Activated CD4-positive, alpha-beta memory T cell treated with anti-CD3 and anti-CD28 coated beads for 36 hours (primary cell): ENCODE measurements at regions of chr5 and their contacts with region 1.

Region 1: DNA sequence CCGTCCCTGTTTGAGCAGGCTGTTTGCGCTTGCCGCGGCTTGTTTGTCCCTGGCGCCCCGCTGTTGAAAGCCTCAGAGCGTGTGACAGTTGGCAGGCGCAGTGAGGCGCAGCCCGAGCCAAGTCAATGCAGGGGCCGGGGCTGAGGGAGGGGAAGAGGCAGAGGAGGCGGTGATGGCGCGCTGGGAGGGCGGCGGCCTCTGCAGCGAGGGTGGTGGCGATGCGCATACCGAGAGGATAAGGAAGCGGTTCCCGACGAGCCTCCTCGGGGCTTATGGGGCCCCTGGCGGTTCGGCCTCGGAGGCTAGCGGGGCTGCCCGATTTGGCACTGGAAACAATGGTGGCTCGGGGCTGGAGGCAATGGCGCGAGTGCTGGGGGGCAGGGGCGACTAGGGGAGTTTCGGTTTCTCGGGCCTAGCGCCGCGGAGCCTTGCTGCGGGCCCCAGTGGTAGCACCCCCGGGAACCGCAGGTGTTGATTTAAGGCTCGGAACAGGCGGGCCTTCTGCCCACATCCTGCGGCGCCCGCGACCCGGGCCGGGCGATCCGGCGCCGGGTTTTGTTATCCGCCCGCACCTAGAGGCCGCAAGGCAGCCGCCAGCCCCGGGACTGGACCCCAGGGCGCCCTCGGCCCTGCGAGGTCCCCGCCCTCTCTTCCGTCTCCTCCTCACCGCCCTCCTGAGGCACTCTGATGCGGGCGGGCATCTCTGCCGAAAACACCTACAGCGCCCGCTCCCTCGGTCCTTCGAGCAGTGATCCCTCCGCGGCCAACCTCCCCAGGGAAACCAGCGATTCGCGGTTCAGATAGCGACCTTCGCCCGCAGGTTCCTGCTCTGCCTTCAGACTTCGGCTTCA is 947 bp upstream of the LNPEP start:
- DNase-seq: peak; percentile 96
- H3K4me3 Mint-ChIP-seq: peak overlapping the region; percentile 90
- H3K27ac Mint-ChIP-seq: peak overlapping the region; percentile 98
- H3K4me1 Mint-ChIP-seq: peaks cover 58% of the 10 kb centered on the region
- H3K27me3 Mint-ChIP-seq: no peaks in the 10 kb centered on the region

Region 2: DNA sequence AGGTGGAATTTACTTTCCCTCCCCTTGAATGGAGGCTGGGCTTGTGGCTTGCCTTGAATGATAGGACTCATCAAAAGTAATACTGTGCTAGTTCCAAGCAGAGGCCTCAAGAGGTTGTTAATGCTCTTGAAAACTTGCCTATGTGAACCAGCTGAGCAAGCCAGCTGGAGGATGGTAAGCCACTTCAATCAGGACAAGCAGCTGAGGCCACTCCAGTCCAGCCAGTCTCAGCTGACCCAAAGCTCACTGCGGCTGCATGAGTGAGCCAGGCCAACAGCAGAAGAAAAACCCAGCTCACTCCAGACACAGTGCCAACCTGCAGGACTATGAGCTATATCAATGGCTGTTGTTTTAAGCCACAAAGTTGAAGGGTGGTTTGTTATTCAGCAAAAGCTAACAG is 1832.9 kb before region 1 on chr5:
- CTCF ChIA-PET with region 1: no interaction called
- POLR2A ChIA-PET with region 1: no interaction called
- intact Hi-C with region 1: no loop called
- DNase-seq: no peak
- H3K4me3 Mint-ChIP-seq: no peak overlapping the region
- H3K27ac Mint-ChIP-seq: no peak overlapping the region
- H3K4me1 Mint-ChIP-seq: no peaks in the 10 kb centered on the region
- H3K27me3 Mint-ChIP-seq: no peaks in the 10 kb centered on the region

Region 3: DNA sequence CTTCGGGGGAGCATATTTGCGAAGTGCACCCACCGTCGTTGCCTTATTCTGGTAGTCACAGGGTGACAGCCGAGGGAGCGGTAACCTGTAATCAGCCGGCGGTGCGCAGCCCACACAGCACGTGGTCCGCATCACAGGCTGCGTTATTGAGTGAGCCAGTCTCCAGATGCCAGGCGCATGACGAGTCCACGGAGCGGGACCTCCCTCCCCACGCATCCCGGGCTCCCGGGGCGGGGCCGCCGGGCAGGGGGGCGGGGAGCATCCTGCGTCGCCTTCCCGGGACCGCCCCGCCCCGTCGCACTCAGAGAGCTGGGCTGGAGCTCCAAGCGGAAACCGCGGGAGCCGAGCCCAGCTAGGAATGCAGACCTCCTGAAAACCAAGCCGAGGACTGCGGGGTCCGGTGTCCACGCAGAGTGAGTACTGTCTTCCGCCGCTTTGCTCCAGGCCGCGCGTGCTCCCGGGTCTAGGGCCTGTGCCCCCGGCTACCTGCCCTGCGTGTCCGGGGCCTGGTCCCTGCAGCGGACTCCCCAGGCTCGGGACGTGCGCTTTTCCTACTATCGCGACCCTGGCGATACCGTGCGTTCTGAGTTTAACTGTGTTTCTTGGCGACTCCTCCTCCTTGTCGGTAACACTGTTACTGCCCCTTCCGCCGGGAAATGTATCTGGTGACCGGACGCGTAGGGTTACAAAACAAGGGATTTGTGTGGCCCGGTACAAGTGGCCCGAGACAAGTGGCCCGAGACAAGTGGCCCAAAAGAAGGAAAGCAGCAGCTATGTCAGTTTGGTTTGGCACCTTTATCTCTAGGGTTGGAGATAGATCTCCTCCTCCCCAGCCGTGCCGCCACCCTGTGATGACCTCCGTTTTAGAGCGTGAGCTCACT is 232.2 kb before region 1 on chr5:
- CTCF ChIA-PET with region 1: interaction called, 3 read pairs
- POLR2A ChIA-PET with region 1: no interaction called
- intact Hi-C with region 1: loop called (anchors 1 kb)
- DNase-seq: peak; percentile 92
- H3K4me3 Mint-ChIP-seq: peak overlapping the region; percentile 84
- H3K27ac Mint-ChIP-seq: peak overlapping the region; percentile 85
- H3K4me1 Mint-ChIP-seq: peaks cover 52% of the 10 kb centered on the region
- H3K27me3 Mint-ChIP-seq: no peaks in the 10 kb centered on the region

Region 4: DNA sequence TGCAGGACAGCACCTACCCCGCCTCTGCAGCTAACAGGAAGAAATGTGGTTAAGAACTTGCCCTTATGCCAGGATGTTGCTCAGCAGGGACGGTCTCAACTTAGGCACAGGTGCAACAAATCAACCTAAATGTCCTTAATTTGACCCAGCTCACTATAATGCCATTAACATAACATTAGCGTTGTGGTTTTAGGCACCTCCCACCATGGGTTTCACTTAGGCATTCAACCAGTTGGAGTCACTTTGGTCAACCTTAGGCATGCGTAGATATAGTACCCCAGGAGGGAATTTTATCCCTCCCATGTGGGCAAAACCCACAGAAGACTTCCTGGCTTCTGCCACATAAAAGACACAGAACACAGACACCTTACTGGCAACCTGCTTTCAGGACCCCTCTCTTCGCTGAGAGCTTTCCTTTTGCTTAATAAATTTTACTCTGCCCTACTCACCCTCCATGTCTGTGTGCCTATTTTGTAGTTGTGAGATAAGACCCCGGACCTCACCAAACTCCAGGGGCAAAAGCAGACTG is 118.5 kb before region 1 on chr5:
- CTCF ChIA-PET with region 1: no interaction called
- POLR2A ChIA-PET with region 1: no interaction called
- intact Hi-C with region 1: loop called (anchors 2 kb)
- DNase-seq: peak; percentile 70
- H3K4me3 Mint-ChIP-seq: peak overlapping the region; percentile 78
- H3K27ac Mint-ChIP-seq: peak overlapping the region; percentile 93
- H3K4me1 Mint-ChIP-seq: peaks cover 64% of the 10 kb centered on the region
- H3K27me3 Mint-ChIP-seq: no peaks in the 10 kb centered on the region

Region 5: DNA sequence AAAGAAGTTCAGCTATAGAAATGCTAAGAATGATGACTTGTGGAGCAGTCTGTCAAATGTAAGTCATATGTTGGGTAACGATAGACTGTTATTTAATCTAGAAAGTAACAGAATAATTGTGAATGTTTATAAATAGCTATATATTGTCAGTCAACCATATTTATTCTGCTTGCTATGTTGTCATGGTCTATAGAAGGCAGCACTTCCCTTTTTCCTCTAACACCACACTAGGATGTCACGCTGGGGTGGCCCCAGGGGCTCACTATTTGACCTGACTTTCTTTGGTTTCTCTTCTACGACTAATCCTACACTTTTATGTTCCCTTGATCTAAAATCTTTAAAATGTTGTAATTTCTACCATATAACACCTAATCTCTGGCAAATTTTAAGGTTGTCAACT is 38.1 kb before region 1 on chr5:
- CTCF ChIA-PET with region 1: interaction called, 3 read pairs
- POLR2A ChIA-PET with region 1: interaction called, 8 read pairs
- intact Hi-C with region 1: loop called (anchors 1 kb)
- DNase-seq: peak; percentile 62
- H3K4me3 Mint-ChIP-seq: peak overlapping the region; percentile 79
- H3K27ac Mint-ChIP-seq: peak overlapping the region; percentile 93
- H3K4me1 Mint-ChIP-seq: peaks cover 48% of the 10 kb centered on the region
- H3K27me3 Mint-ChIP-seq: no peaks in the 10 kb centered on the region

Region 6: GRCh38 chr5:96963267-96963666 is 28.3 kb after region 1 on chr5:
- CTCF ChIA-PET with region 1: interaction called, 3 read pairs
- POLR2A ChIA-PET with region 1: interaction called, 9 read pairs
- intact Hi-C with region 1: loop called (anchors 1 kb)
- DNase-seq: peak; percentile 41
- H3K4me3 Mint-ChIP-seq: peak overlapping the region; percentile 59
- H3K27ac Mint-ChIP-seq: peak overlapping the region; percentile 86
- H3K4me1 Mint-ChIP-seq: peaks cover 77% of the 10 kb centered on the region
- H3K27me3 Mint-ChIP-seq: no peaks in the 10 kb centered on the region

Region 7: DNA sequence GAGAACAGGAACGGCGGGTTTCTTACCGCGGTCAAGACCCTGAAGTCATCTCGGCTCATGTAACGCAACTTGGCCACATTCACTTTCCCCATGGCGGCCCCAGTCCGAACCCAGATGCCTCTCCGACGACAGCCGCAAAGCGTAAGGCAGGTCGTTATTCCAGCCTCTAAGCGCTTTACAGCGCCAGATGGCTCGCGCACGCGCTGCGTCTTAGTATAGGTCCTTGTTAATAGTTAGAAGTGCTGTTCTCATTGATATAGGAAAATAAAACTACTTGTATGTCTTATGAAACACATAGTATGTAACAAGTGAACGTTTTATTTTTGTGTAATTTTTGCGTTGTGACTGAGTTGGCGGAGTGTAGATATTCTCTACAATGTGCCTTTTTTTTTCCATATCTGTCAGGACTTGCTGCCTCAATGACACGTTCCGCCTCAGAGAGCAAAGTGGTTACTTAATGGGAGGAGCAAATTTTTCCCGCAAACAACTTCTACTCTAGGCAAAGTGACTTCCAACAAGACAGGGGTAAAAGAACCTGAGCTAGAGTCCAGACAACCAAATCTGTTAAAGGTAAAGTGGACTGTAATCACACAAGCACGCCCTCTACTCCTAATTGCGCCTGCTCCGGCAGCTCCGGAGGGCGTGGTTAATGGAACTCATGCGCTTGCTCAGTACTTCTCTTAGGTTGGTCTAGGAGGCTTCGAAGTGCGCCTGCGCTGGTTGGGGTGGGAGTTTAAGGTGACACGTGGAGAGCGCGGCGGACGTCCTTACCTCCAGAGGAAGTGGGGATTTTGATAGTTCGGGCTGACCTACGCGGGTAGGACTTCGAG is 248.4 kb after region 1 on chr5 and contains the start of gene RIOK2:
- CTCF ChIA-PET with region 1: no interaction called
- POLR2A ChIA-PET with region 1: no interaction called
- intact Hi-C with region 1: loop called (anchors 1 kb)
- DNase-seq: peak; percentile 96
- H3K4me3 Mint-ChIP-seq: peak within 1 kb of the TSS; percentile 87
- H3K27ac Mint-ChIP-seq: peak within 1 kb of the TSS; percentile 98
- H3K4me1 Mint-ChIP-seq: peaks cover 34% of the 10 kb centered on the region
- H3K27me3 Mint-ChIP-seq: no peaks in the 10 kb centered on the region
- total RNA-seq, gene RIOK2: 31.8 to 41.5 TPM